ENCODE measurements at regions of chr6 and their contacts with region 1.

Region 1: GRCh38 chr6:27132532-27133280 is 114.8 kb upstream of the PRSS16 start:
- DNase-seq: peak; percentile 73 to 99 (median 97)
- ATAC-seq: peak; percentile 93
- H3K4me3 ChIP-seq: peak overlapping the region; percentile 90
- H3K4me3 Mint-ChIP-seq: no peak overlapping the region
- H3K27ac ChIP-seq: peak overlapping the region; percentile 81
- H3K27ac Mint-ChIP-seq: no peak overlapping the region
- H3K4me1 ChIP-seq: peaks cover 10 to 18% of the 10 kb centered on the region in 2 donors
- H3K4me1 Mint-ChIP-seq: peaks cover 6 to 49% (median 21%) of the 10 kb centered on the region in 7 donors
- H3K27me3 ChIP-seq: no peaks in the 10 kb centered on the region
- H3K27me3 Mint-ChIP-seq: no peaks in the 10 kb centered on the region

Region 2: GRCh38 chr6:26045065-26045927 is 1087.4 kb before region 1 on chr6:
- CTCF ChIA-PET with region 1: no interaction called
- POLR2A ChIA-PET with region 1: interaction called, 41 read pairs
- intact Hi-C with region 1: no loop called
- DNase-seq: peak; percentile 39 to 93 (median 89)
- ATAC-seq: peak; percentile 68
- H3K4me3 ChIP-seq: peak overlapping the region; percentile 91
- H3K4me3 Mint-ChIP-seq: peak overlapping the region; percentile 87 to 98 (median 94)
- H3K27ac ChIP-seq: peak overlapping the region; percentile 90
- H3K27ac Mint-ChIP-seq: peak overlapping the region; percentile 80 to 98 (median 95)
- H3K4me1 ChIP-seq: peaks cover 7 to 19% of the 10 kb centered on the region in 2 donors
- H3K4me1 Mint-ChIP-seq: peaks cover 8 to 51% (median 20%) of the 10 kb centered on the region in 7 donors
- H3K27me3 ChIP-seq: no peaks in the 10 kb centered on the region
- H3K27me3 Mint-ChIP-seq: peaks cover 0 to 3% (median 0%) of the 10 kb centered on the region in 5 donors

Region 3: DNA sequence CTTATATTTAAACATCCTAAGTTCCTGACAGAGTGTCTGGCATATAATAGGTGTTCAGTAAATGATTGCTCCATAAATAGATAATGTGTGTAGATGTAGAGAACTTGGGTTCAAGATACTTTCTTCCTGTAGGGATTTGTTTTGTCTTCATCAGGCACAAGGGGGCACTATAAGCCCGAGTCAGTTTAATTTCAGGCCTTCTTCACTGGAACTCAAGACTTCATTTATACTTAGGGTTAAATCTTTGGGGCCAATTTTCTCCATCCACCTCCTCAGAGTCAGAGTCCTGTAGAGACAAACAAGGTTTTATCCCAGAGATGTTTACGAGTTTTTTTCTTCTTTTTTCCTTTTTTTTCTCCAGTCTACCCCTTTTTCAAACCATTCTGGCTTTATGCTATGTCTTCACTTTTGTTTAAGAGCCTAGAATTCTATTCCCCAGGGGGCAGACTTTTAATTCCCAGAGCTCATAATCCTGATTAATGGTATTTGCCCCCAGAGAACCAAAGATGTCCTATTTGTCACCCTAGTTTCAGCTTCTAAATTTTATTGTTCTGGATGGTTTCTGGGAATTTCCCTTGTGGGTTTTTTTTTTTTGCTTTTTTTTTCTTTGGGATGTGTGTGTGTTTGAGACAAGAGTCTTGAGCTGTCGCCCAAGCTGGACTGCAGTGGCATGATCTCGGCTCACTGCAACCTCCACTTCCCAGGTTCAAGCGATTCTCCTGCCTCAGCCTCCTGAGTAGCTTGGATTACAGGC is 957.1 kb before region 1 on chr6:
- CTCF ChIA-PET with region 1: no interaction called
- POLR2A ChIA-PET with region 1: interaction called, 10 read pairs
- intact Hi-C with region 1: loop called in 1 of 2 experiments (anchors 5 kb)
- DNase-seq: peak in 7 of 9 donors; percentile 57 to 75 (median 66)
- ATAC-seq: peak; percentile 32
- H3K4me3 ChIP-seq: no peak overlapping the region
- H3K4me3 Mint-ChIP-seq: peak overlapping the region in 7 of 10 donors; percentile 15 to 63 (median 43)
- H3K27ac ChIP-seq: no peak overlapping the region
- H3K27ac Mint-ChIP-seq: peak overlapping the region; percentile 32 to 89 (median 76)
- H3K4me1 ChIP-seq: peaks cover 16 to 19% of the 10 kb centered on the region in 2 donors
- H3K4me1 Mint-ChIP-seq: peaks cover 20 to 51% (median 39%) of the 10 kb centered on the region in 7 donors
- H3K27me3 ChIP-seq: no peaks in the 10 kb centered on the region
- H3K27me3 Mint-ChIP-seq: no peaks in the 10 kb centered on the region

Region 4: GRCh38 chr6:26270903-26271667 is 861.6 kb before region 1 on chr6:
- CTCF ChIA-PET with region 1: no interaction called
- POLR2A ChIA-PET with region 1: interaction called, 31 read pairs
- intact Hi-C with region 1: loop called (anchors 1 to 5 kb)
- DNase-seq: peak; percentile 50 to 89 (median 85)
- ATAC-seq: peak; percentile 24
- H3K4me3 ChIP-seq: peak overlapping the region; percentile 83
- H3K4me3 Mint-ChIP-seq: no peak overlapping the region
- H3K27ac ChIP-seq: peak overlapping the region; percentile 82
- H3K27ac Mint-ChIP-seq: peak overlapping the region in 2 of 9 donors; percentile 10 to 91
- H3K4me1 ChIP-seq: peaks cover 6 to 27% of the 10 kb centered on the region in 2 donors
- H3K4me1 Mint-ChIP-seq: peaks cover 0 to 34% (median 15%) of the 10 kb centered on the region in 7 donors
- H3K27me3 ChIP-seq: no peaks in the 10 kb centered on the region
- H3K27me3 Mint-ChIP-seq: no peaks in the 10 kb centered on the region

Region 5: GRCh38 chr6:27157459-27158315 is 25.0 kb after region 1 on chr6:
- CTCF ChIA-PET with region 1: interaction called, 26 read pairs
- POLR2A ChIA-PET with region 1: interaction called, 795 read pairs
- intact Hi-C with region 1: loop called (anchors 1 kb)
- DNase-seq: peak in 8 of 9 donors; percentile 77 to 92 (median 87)
- ATAC-seq: peak; percentile 86
- H3K4me3 ChIP-seq: peak overlapping the region; percentile 76
- H3K4me3 Mint-ChIP-seq: peak overlapping the region; percentile 82 to 94 (median 87)
- H3K27ac ChIP-seq: peak overlapping the region; percentile 54
- H3K27ac Mint-ChIP-seq: peak overlapping the region; percentile 80 to 96 (median 92)
- H3K4me1 ChIP-seq: peaks cover 12% of the 10 kb centered on the region in 2 donors
- H3K4me1 Mint-ChIP-seq: peaks cover 29 to 47% (median 43%) of the 10 kb centered on the region in 7 donors
- H3K27me3 ChIP-seq: no peaks in the 10 kb centered on the region
- H3K27me3 Mint-ChIP-seq: peaks cover 0 to 6% (median 0%) of the 10 kb centered on the region in 5 donors

Region 6: GRCh38 chr6:27230758-27231111 is 98.0 kb after region 1 on chr6:
- CTCF ChIA-PET with region 1: no interaction called
- POLR2A ChIA-PET with region 1: no interaction called
- intact Hi-C with region 1: no loop called
- DNase-seq: no peak
- ATAC-seq: no peak
- H3K4me3 ChIP-seq: no peak overlapping the region
- H3K4me3 Mint-ChIP-seq: no peak overlapping the region
- H3K27ac ChIP-seq: no peak overlapping the region
- H3K27ac Mint-ChIP-seq: no peak overlapping the region
- H3K4me1 ChIP-seq: no peaks in the 10 kb centered on the region
- H3K4me1 Mint-ChIP-seq: peaks cover 0 to 7% (median 6%) of the 10 kb centered on the region in 7 donors
- H3K27me3 ChIP-seq: peaks cover 6 to 7% of the 10 kb centered on the region in 2 donors
- H3K27me3 Mint-ChIP-seq: peaks cover 52 to 87% (median 83%) of the 10 kb centered on the region in 5 donors

Region 7: GRCh38 chr6:27864906-27865849 is 732.5 kb after region 1 on chr6:
- CTCF ChIA-PET with region 1: no interaction called
- POLR2A ChIA-PET with region 1: interaction called, 77 read pairs
- intact Hi-C with region 1: loop called in 1 of 2 experiments (anchors 1 kb)
- DNase-seq: peak; percentile 56 to 93 (median 89)
- ATAC-seq: peak; percentile 85
- H3K4me3 ChIP-seq: peak overlapping the region; percentile 74
- H3K4me3 Mint-ChIP-seq: peak overlapping the region; percentile 85 to 99 (median 97)
- H3K27ac ChIP-seq: peak overlapping the region; percentile 71
- H3K27ac Mint-ChIP-seq: peak overlapping the region; percentile 88 to 98 (median 95)
- H3K4me1 ChIP-seq: peaks cover 8 to 25% of the 10 kb centered on the region in 2 donors
- H3K4me1 Mint-ChIP-seq: peaks cover 22 to 64% (median 46%) of the 10 kb centered on the region in 7 donors
- H3K27me3 ChIP-seq: no peaks in the 10 kb centered on the region
- H3K27me3 Mint-ChIP-seq: peaks cover 0 to 16% (median 0%) of the 10 kb centered on the region in 5 donors

Region 8: DNA sequence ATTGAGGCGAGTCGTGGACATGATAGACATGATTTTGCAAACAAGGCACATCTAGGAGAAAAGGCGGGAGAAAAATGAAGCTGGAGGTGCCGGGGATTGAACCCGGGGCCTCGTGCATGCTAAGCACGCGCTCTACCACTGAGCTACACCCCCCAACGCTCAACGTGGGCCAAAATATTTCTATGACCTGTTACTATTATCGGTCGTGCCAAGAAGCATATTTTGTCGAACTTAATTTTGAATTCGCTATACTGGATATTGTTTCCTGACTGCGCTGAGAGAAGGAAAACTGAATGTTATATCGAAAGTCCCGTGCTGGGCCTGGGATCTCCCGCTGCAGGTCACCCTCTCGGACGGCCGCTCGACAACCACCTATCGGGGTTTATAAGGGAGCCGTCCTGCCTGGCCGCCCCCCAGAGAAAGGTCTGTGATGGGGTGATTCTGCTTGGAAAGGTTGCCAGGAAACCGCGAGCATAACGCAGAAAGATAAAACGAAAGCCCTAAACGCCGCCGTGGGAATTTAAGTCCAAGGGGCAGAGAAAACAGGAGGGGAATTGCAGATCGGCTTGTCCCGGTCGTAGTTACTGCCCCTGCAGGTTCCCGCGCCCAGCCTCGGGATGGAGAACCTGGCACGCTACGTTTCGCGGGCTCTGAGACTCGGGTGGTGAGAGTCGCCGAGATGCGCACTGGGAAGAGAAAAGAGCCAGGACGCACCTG is 1731.1 kb after region 1 on chr6:
- CTCF ChIA-PET with region 1: no interaction called
- POLR2A ChIA-PET with region 1: interaction called, 6 read pairs
- intact Hi-C with region 1: loop called in 1 of 2 experiments (anchors 10 kb)
- DNase-seq: peak; percentile 60 to 93 (median 89)
- ATAC-seq: peak; percentile 64
- H3K4me3 ChIP-seq: peak overlapping the region; percentile 95
- H3K4me3 Mint-ChIP-seq: peak overlapping the region; percentile 90 to 98 (median 92)
- H3K27ac ChIP-seq: peak overlapping the region; percentile 75
- H3K27ac Mint-ChIP-seq: peak overlapping the region; percentile 89 to 100 (median 95)
- H3K4me1 ChIP-seq: peaks cover 11 to 18% of the 10 kb centered on the region in 2 donors
- H3K4me1 Mint-ChIP-seq: peaks cover 15 to 69% (median 53%) of the 10 kb centered on the region in 7 donors
- H3K27me3 ChIP-seq: no peaks in the 10 kb centered on the region
- H3K27me3 Mint-ChIP-seq: peaks cover 0 to 30% (median 4%) of the 10 kb centered on the region in 5 donors

Measured in naive thymus-derived CD4-positive, alpha-beta T cell (primary cell).